Head of caudate nucleus (tissue), 42 donors: ENCODE measurements at regions of chr5 and their contacts with region 1.

Region 1: DNA sequence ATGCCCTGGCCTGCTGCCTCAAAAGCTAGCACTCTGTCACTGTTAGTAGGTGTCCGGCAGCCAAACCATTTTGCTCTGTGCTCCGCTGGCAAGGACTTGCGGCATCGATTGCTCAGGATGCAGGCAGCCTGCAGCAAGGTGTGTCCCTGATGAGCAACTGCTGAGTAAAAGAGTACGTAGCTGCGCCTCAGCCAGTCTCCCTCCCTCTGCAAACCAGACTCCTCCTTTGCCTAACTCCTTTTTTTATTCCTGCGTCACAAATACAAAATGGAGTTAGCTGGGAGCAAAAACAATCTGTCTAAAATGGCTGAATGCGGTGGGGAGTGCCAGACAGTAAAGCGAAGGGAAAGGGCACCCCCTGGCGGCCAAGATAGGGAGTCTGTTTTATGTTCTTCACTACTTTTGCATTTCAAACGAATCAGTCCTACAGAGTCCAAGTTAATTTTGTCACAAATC is 61.1 kb downstream of the DIAPH1 start:
- DNase-seq: peak; percentile 77 to 97 (median 90)

Region 2: DNA sequence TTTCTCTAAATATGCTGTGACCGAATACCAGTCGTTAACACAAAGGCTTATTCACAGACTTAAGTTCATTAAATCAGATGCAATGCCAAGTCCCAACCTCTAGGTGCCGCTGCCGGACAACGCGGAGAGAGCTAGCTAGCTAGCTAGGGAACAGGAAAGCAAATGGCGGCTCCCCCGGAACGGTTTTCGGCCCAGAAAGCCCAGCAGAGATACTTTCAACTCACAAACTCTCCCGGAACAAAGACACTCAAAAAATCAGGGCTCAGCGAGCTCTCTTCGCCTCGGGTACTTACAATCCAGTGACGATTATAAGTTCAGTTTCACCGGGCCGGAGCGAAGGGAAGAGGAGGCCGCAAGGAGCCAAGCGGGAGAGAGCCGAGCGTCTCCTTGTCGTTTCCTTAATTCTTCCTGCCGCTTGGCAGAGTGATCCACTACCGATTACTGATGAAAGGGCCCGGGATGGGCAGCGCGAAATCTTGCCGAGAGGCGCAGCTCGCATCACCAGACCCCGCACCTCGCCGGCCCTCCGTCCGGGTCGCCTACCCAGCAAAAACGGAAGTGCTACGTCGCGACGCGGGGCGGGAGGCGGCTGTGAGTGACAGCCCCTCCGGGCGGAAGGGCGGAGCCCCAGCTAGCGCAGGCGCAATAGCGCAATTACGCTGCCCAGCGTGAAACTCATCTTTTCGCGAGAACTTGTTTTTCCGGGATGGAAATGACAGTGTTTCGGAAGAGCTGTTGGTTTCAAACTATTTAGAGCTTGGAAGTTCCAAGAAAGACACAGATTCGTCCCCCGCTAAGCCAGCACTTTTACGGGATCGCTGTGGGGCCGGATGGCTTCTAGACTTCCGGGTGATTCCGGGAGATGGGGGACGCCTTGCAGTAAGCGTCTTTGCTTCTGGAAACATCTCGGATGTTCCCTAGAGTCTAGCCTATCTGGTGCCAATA is 237.2 kb before region 1 on chr5 and contains the start of gene TAF7:
- intact Hi-C with region 1: loop called (anchors 2 kb)
- DNase-seq: peak; percentile 80 to 96 (median 92)

Region 3: DNA sequence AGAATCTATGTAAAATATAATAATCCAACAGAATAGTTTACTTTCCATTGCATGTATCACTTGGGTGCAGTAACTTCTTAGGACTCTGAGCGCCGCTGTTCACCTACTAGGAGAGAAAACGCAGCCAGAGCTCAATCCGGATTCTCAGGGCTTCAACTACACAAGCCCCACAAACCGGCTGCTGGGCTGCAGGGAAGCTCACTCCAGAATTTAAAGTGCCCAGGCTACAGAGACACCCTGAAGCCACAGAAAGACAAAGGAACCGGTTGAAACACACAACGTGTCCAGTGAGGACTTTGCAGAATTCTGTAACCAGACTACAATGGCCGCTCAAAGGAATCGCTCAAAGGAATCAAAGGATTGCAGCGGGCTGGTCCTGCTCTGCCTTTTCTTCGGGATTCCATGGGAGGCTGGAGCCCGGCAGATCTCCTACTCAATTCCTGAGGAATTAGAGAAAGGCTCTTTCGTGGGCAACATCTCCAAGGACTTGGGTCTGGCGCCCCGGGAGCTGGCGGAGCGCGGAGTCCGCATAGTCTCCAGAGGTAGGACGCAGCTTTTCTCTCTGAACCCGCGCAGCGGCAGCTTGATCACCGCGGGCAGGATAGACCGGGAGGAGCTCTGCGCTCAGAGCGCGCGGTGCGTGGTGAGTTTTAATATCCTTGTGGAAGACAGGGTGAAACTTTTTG is 144.7 kb before region 1 on chr5 and contains the start of gene PCDHGA10:
- intact Hi-C with region 1: loop called (anchors 10 kb)
- DNase-seq: peak in 10 of 42 donors; percentile 15 to 68 (median 36)

Region 4: DNA sequence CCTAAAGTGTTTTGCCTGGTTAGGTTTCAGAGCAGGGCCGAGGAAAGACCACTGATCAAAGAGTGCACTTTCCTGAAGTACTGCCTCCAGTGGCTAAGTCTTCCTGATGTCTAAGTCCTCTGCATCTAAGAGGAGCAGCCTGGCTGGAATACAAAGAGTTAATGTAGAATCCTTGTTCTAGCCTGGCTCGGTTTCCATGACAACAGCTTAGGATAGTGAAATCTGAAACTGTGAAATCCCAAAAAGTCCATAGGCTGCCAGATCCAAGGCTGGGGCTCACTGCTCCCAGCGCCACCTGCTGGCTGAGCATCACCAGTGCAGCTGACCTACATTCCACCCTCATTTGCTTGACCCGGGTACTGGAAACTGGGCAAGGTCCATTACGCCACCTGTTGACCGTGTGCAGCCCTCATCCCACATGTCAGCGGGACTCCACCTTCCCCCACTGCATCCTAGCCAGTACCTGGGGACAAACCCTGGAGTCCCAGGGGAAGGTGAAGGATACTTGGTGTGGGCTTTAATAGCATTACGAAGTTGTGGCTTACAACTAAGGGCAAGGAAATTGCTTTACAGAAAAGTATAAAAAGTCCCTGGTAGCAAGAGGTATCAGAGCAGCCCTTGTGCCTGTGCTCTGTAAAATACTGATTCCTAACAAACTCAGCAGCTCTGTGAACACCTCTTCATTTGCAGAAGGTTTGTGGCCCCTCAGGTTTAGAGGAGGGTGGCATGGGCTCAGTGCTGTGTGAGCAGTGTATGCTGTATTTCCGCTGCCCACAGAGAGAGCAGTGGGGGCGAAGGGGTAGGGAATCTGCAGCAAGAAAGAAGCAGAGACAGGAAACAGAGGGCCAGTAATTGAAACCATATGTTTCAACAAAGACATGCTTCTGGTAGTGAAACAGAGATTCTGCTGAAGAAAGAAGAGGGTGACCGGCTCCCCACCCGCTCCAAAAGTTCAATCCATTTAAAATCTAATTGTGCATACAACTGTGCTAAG is 32.8 kb before region 1 on chr5:
- intact Hi-C with region 1: loop called (anchors 5 kb)
- DNase-seq: peak; percentile 58 to 94 (median 83)

Region 5: GRCh38 chr5:141623186-141623585 is 65.5 kb after region 1 on chr5:
- intact Hi-C with region 1: no loop called
- DNase-seq: peak in 3 of 42 donors; percentile 12 to 29 (median 19)

Region 6: GRCh38 chr5:141747152-141748141 is 189.7 kb after region 1 on chr5:
- intact Hi-C with region 1: no loop called
- DNase-seq: peak; percentile 80 to 98 (median 94)